SK-N-SH (cell line): ENCODE measurements at regions of chr3 and their contacts with region 1.

Region 1: DNA sequence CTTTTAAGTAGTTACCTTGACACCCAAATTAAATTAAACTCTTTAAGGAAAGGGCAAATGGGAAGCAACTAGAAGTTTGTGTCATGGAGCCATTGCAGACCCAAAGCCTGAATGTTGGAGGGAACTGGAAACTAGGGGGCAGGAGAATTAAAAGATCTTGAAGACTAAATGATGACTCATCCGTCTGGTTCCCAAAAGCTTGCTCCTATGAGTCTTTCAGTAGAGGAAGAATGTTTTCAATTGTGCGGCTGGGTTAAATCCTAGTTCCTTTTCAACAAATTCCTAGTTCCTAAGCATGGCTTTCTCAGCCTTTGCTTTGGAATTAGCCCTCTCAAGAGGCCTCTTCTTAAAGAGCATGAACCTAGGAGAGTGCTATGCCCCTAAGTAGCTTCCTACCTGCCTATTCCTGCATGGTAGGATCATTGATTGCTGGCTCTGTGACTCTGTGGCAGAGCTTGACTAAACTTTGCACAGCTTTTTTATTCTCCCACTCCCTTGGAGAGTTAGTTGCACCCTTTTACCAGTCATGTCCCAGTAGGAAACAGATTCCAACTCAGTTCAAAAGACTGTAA is 17.7 kb downstream of the CLEC3B start:
- DNase-seq: no peak
- H3K4me3 ChIP-seq: no peak overlapping the region
- H3K27ac ChIP-seq: peak overlapping the region; percentile 51 to 87; a peak in 3 of 4 replicates
- H3K4me1 ChIP-seq: peaks cover 0 to 10% of the 10 kb centered on the region in 2 experiments; a peak in 2 of 4 replicates
- H3K27me3 ChIP-seq: no peaks in the 10 kb centered on the region
- CTCF ChIP-seq: peak; percentile 45
- EP300 ChIP-seq: no peak
- RAD21 ChIP-seq: peak; percentile 33; the same call in 1 of the 2 replicates

Region 2: DNA sequence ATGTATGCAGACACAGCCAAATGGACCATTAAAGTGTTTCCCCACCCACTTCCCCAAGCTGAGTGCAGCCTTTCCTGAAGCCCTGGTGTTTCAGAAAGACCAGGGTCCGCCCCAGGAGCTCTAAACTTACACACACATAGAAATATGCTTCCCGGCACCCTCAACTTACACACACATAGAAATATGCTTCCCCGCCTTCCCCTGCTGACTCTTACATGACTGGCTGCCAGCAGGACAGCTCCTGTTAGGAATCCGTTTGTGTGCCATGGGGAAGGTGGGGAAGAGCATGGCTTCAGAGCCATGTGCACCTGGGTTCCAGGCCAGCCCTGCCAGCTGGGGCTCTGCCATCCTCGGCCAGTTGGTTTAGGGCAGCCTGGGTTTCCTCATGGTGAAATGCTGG is 14.2 kb before region 1 on chr3:
- CTCF ChIA-PET with region 1: interaction called, 27 read pairs
- POLR2A ChIA-PET with region 1: no interaction called
- DNase-seq: no peak
- H3K4me3 ChIP-seq: no peak overlapping the region
- H3K27ac ChIP-seq: no peak overlapping the region
- H3K4me1 ChIP-seq: no peaks in the 10 kb centered on the region; a peak in 2 of 4 replicates
- H3K27me3 ChIP-seq: no peaks in the 10 kb centered on the region
- CTCF ChIP-seq: no peak
- EP300 ChIP-seq: no peak
- RAD21 ChIP-seq: no peak

Region 3: GRCh38 chr3:45119824-45120614 is 76.2 kb after region 1 on chr3:
- CTCF ChIA-PET with region 1: interaction called, 21 read pairs
- POLR2A ChIA-PET with region 1: no interaction called
- DNase-seq: no peak
- H3K4me3 ChIP-seq: no peak overlapping the region
- H3K27ac ChIP-seq: no peak overlapping the region
- H3K4me1 ChIP-seq: peaks cover 23% of the 10 kb centered on the region in 2 experiments
- H3K27me3 ChIP-seq: no peaks in the 10 kb centered on the region
- CTCF ChIP-seq: no peak
- EP300 ChIP-seq: no peak
- RAD21 ChIP-seq: no peak

Region 4: GRCh38 chr3:45199837-45200648 is 156.2 kb after region 1 on chr3:
- CTCF ChIA-PET with region 1: interaction called, 631 read pairs
- POLR2A ChIA-PET with region 1: no interaction called
- DNase-seq: no peak
- H3K4me3 ChIP-seq: 0 out of 4 replicates have a peak overlapping the region, but pooled peaks of 1 of the 2 experiments have one; percentile 29
- H3K27ac ChIP-seq: peak overlapping the region; percentile 3 to 81; a peak in 3 of 4 replicates
- H3K4me1 ChIP-seq: peaks cover 0 to 20% of the 10 kb centered on the region in 2 experiments; a peak in 3 of 4 replicates
- H3K27me3 ChIP-seq: no peaks in the 10 kb centered on the region
- CTCF ChIP-seq: no peak
- EP300 ChIP-seq: peak in 1 of 2 experiments; percentile 28; a peak in 1 of 4 replicates
- RAD21 ChIP-seq: no peak

Region 5: GRCh38 chr3:45499529-45499928 is 455.7 kb after region 1 on chr3:
- CTCF ChIA-PET with region 1: interaction called, 84 read pairs
- POLR2A ChIA-PET with region 1: no interaction called
- DNase-seq: peak; percentile 51
- H3K4me3 ChIP-seq: no peak overlapping the region
- H3K27ac ChIP-seq: no peak overlapping the region
- H3K4me1 ChIP-seq: no peaks in the 10 kb centered on the region
- H3K27me3 ChIP-seq: no peaks in the 10 kb centered on the region
- CTCF ChIP-seq: peak; percentile 68
- EP300 ChIP-seq: no peak
- RAD21 ChIP-seq: peak; percentile 71

Region 6: DNA sequence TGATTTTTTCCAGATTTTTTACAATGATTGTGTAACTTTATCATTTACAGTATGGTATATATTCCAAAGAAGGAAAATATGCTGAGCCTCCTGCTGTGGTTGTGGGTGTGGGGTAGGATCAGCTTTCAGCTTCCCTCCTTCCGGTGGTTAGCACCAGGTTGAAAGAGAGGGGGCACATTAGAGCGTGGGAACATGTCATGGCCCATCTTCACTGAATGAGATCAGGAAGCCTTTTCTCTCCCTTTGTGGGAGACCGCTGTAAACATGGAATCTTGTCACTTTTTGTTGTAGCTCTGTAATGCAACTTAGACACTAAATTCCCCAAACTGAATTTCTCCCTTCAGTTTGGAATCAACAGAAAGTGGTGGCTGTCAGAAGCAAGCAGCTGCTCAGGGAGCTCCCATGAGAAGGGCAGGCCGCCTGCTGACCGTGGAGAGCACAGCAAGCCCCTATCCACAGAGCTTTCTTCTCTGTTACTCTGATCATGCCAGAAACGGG is 464.1 kb after region 1 on chr3:
- CTCF ChIA-PET with region 1: interaction called, 28 read pairs
- POLR2A ChIA-PET with region 1: no interaction called
- DNase-seq: peak; percentile 30
- H3K4me3 ChIP-seq: peak overlapping the region in 1 of 2 experiments; percentile 5; a peak in 1 of 4 replicates
- H3K27ac ChIP-seq: peak overlapping the region in 1 of 2 experiments; percentile 76; a peak in 2 of 4 replicates
- H3K4me1 ChIP-seq: peaks cover 2 to 30% of the 10 kb centered on the region in 2 experiments; a peak in 3 of 4 replicates
- H3K27me3 ChIP-seq: no peaks in the 10 kb centered on the region
- CTCF ChIP-seq: peak; percentile 48
- EP300 ChIP-seq: no peak
- RAD21 ChIP-seq: peak; percentile 43